Heart left ventricle (tissue), 16 donors: ENCODE measurements at regions of chr1 and their contacts with region 1.

Region 1: DNA sequence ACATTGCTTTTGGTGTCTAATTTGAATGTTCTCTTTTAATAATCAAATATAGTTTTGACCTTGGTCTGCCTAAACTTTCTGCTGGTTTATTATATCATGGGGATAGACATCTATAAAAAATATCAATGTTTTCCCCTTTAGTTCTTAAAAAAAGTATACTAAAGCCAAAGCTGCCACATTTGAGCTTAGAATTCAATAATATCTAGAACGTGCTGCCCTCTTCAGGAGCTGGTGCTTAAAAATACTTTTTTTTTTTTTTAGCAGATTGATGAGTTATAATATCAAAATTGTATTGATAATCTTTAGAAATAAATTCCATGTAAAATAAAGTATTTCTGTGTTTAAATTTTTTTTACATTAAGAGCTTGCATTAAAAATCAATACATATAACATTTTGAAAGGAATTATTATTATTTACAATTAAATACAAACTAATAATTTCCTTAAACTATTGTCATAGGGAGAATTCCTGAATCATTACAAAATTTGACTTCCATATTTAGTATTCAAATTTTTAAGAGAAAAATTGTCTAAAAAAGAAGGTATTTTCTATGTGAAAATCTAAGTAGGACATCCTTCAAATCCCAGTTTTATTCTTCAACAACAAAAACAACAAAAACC is 40.1 kb upstream of the ADGRL2 start:
- DNase-seq: no peak
- ATAC-seq: no peak
- H3K4me3 ChIP-seq: no peak overlapping the region
- H3K27ac ChIP-seq: no peak overlapping the region
- H3K4me1 ChIP-seq: peaks cover 0 to 15% (median 3%) of the 10 kb centered on the region in 12 donors
- H3K27me3 ChIP-seq: no peaks in the 10 kb centered on the region
- CTCF ChIP-seq: peak in 10 of 12 donors; percentile 17 to 63 (median 54)
- POLR2A ChIP-seq: no peak

Region 2: DNA sequence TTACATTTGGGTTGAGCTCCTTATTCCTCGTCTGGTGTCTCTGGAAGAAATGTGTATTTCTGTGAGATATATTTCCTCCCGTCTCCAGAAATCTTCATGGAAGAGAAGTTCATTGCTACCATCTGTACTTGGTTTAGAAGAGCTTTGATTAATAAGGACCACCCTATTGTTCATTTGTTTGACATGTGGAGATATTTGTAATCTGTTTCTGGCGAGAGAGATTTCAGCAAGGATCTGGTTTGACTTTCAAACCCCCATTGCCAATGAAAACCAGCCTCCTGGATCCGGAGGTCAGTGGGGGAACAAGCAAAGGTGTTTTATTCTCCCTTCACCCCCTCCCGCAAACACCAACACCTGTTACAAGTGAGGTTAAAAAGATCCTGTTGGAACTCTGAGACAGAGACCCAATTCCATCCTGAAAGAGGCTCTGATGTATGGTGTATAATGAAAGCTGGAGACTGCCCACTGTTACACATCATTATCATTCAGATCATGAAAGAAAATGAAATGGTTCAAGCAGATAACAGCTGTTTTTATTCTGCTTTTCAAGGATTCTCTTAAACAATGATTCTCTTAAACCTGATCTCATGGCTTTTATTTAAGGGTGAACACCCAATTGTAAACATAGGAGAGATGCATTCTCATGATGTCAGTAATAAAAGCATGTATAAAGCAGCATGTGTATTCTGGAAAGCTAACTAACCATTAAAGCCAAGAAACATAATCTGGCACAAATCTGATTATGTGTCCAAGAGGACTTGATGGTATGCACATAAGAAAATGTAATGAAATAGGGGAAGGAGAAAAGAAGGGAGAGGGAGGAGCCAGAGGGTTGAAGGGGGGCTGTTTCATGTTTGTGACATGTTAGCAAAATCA is 353.3 kb before region 1 on chr1:
- intact Hi-C with region 1: loop called in 6 of 10 experiments (anchors 5 to 10 kb)
- DNase-seq: no peak
- ATAC-seq: no peak
- H3K4me3 ChIP-seq: no peak overlapping the region
- H3K27ac ChIP-seq: peak overlapping the region in 2 of 12 donors; percentile 13 to 43
- H3K4me1 ChIP-seq: peaks cover 0 to 30% (median 10%) of the 10 kb centered on the region in 12 donors
- H3K27me3 ChIP-seq: no peaks in the 10 kb centered on the region
- CTCF ChIP-seq: no peak
- POLR2A ChIP-seq: no peak

Region 3: GRCh38 chr1:81559662-81560350 is 200.8 kb before region 1 on chr1:
- intact Hi-C with region 1: loop called in 3 of 10 experiments (anchors 10 kb)
- DNase-seq: no peak
- ATAC-seq: no peak
- H3K4me3 ChIP-seq: no peak overlapping the region
- H3K27ac ChIP-seq: no peak overlapping the region
- H3K4me1 ChIP-seq: no peaks in the 10 kb centered on the region
- H3K27me3 ChIP-seq: no peaks in the 10 kb centered on the region
- CTCF ChIP-seq: peak in 5 of 12 donors; percentile 5 to 65 (median 23)
- POLR2A ChIP-seq: no peak